ENCODE measurements at regions of chr13 and their contacts with region 1.

Region 1: DNA sequence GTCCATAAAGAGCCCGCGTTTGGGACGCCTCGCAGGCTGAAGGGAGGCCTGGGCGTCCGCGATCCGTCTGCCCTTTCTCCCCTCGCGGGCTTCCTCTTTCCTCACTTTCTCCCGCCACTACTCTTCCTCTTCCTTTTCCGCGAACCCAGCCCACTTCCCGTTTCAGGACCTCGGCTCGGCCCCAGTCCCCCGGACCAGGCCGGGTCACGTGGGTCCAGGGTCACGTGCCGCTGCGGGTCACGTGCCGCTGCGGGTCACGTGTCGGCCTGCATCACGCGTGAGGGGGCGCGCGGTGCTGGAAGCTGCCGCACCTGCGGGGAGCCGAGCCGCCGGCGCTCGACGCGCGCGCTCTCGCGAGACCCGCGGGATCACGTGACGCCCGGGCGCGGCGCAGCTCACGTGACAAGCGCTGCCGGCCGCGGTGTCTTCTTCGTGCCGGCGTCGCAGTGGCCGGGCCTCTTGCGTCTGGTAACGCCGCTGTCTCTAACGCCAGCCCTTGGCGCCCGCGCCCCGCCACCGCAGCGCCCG is at the start of gene LAMP1:
- DNase-seq: peak; percentile 94 to 98
- ATAC-seq: peak; percentile 75 to 87
- H3K4me3 ChIP-seq: peak within 1 kb of the TSS; percentile 82 to 92 (median 88)
- H3K27ac ChIP-seq: peak within 1 kb of the TSS; percentile 91 to 98 (median 94)
- H3K4me1 ChIP-seq: peaks cover 34 to 55% of the 10 kb centered on the region in 2 donors
- H3K27me3 ChIP-seq: no peaks in the 10 kb centered on the region
- CTCF ChIP-seq: peak in 2 of 5 experiments; percentile 70 to 79
- POLR2A ChIP-seq: peak; percentile 88 to 89
- total RNA-seq, gene LAMP1: 36.4 to 80.9 (median 66.9) TPM

Region 2: GRCh38 chr13:113153810-113154748 is 142.8 kb before region 1 on chr13:
- in situ Hi-C with region 1: no loop called
- intact Hi-C with region 1: loop called (anchors 10 kb)
- DNase-seq: peak; percentile 75 to 78
- ATAC-seq: peak; percentile 67 to 69
- H3K4me3 ChIP-seq: peak overlapping the region; percentile 57 to 71 (median 64)
- H3K27ac ChIP-seq: peak overlapping the region; percentile 85 to 96 (median 93)
- H3K4me1 ChIP-seq: peaks cover 9 to 16% of the 10 kb centered on the region in 2 donors
- H3K27me3 ChIP-seq: no peaks in the 10 kb centered on the region
- CTCF ChIP-seq: no peak
- POLR2A ChIP-seq: peak; percentile 72 to 73

Region 3: GRCh38 chr13:113216254-113217048 is 80.5 kb before region 1 on chr13:
- in situ Hi-C with region 1: loop called in 1 of 4 experiments (anchors 10 kb)
- intact Hi-C with region 1: loop called (anchors 1 kb)
- DNase-seq: peak; percentile 78 to 92
- ATAC-seq: peak; percentile 95 to 96
- H3K4me3 ChIP-seq: peak overlapping the region in 3 of 4 donors; percentile 12 to 21 (median 12)
- H3K27ac ChIP-seq: peak overlapping the region; percentile 92 to 100 (median 97)
- H3K4me1 ChIP-seq: peaks cover 83 to 94% of the 10 kb centered on the region in 2 donors
- H3K27me3 ChIP-seq: no peaks in the 10 kb centered on the region
- CTCF ChIP-seq: no peak
- POLR2A ChIP-seq: peak in 1 of 2 donors; percentile 60

Region 4: DNA sequence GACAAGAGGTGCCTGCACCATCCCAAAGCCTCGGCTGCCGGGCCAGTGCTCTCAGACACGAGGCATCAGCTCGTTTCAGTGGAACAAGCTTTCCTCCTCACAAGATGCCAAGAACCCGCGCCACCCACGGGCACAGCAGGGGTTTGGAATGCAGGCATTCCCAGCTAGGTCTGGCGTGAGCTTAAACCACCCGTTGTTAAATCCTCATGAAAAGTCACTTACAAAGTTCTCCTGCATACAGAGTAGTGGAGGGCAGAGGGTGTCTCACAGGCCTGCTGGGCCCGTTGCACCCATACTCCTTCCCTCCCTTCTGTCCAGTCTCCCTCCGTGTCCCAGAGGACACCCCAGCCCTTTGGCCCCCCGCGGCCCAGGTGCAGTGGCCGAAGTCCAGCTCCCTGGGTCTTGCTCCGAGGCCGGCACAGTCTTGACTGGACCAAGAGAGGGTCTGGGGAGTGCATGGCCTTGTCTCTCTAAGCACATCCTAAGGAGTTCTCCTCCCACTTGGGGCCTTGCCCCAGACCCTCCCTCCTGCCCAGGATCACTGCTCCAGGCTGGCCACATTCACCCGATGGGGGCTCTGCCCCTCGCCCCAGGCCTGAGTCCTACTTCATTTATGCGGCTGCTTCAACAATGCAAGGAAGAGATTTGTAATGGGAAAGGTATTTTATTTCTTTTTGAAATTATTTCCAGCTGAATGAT is 102.2 kb after region 1 on chr13:
- in situ Hi-C with region 1: loop called in 3 of 4 experiments (anchors 5 to 25 kb)
- intact Hi-C with region 1: loop called (anchors 5 kb)
- DNase-seq: peak in 1 of 2 donors; percentile 28
- ATAC-seq: no peak
- H3K4me3 ChIP-seq: no peak overlapping the region
- H3K27ac ChIP-seq: peak overlapping the region; percentile 99 to 100 (median 100)
- H3K4me1 ChIP-seq: peaks cover 34 to 44% of the 10 kb centered on the region in 2 donors
- H3K27me3 ChIP-seq: no peaks in the 10 kb centered on the region
- CTCF ChIP-seq: no peak
- POLR2A ChIP-seq: no peak

Region 5: GRCh38 chr13:113458253-113459065 is 161.6 kb after region 1 on chr13:
- in situ Hi-C with region 1: loop called in 1 of 4 experiments (anchors 10 kb)
- intact Hi-C with region 1: loop called (anchors 2 kb)
- DNase-seq: no peak
- ATAC-seq: no peak
- H3K4me3 ChIP-seq: no peak overlapping the region
- H3K27ac ChIP-seq: no peak overlapping the region
- H3K4me1 ChIP-seq: peaks cover 5 to 12% of the 10 kb centered on the region in 2 donors
- H3K27me3 ChIP-seq: no peaks in the 10 kb centered on the region
- CTCF ChIP-seq: peak in 1 of 5 experiments; percentile 33
- POLR2A ChIP-seq: no peak